Mammary epithelial cell (primary cell): ENCODE measurements at regions of chr19 and their contacts with region 1.

Region 1: GRCh38 chr19:44002566-44003460 is at the start of gene ZNF230:
- DNase-seq: peak; percentile 95
- H3K4me3 ChIP-seq: peak within 1 kb of the TSS; percentile 89 to 93 (median 91)
- H3K27ac ChIP-seq: peak within 1 kb of the TSS; percentile 45
- H3K4me1 ChIP-seq: peaks cover 11% of the 10 kb centered on the region
- H3K27me3 ChIP-seq: no peaks in the 10 kb centered on the region
- CTCF ChIP-seq: no peak
- total RNA-seq, gene ZNF230: 3.2 to 4.2 TPM

Region 2: DNA sequence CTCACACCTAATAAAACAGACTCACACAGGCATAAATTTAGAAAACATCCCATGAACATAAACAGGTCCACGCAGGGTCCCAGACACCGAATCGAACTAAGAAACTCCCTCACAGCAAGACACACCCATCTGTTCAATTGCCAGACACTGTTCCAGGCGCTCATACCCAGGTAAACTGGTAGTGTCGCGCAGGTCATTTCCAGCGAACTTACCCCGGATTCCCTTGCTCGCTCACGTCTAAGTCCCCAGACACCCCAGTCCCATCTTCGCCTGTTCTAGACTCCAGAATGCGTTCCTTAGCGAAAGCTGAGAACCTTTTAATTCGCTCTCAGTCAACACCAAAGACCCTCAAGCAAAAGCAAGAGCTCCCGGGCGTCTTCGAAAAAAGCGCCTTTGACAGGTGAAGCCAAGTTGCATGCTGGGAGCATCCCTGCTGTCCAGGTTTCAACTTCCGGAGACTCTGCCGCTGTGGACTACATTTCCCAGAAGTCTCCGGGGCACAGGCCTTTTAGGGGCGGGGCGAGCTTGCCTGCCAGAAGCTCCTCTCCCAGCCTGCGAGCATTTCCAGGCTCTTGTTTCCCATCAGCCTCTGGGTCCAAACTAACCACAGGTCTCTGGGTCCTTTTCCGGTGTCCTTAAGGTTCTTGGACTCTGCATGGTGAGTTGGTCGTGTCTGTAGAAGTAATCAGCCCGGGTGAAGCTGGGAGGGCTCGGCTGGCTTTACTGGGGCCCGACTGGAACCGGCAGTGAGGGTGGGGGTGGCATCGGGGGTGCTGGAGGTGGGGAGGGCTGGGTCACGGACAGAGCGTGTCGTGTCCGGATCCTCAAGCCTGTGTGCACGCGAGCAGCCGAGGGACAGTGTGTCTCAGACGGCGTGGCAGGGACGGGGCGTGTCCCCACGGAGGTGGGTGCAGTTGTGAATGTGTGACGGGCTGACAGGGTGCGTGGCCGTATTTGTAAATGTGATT is 175.7 kb before region 1 on chr19 and contains the start of gene ZNF283:
- CTCF ChIA-PET with region 1: no interaction called
- dilution Hi-C with region 1: no loop called
- in situ Hi-C with region 1: no loop called
- intact Hi-C with region 1: loop called (anchors 1 kb)
- DNase-seq: peak; percentile 91
- H3K4me3 ChIP-seq: peak within 1 kb of the TSS; percentile 56 to 72 (median 63)
- H3K27ac ChIP-seq: peak within 1 kb of the TSS; percentile 9
- H3K4me1 ChIP-seq: no peaks in the 10 kb centered on the region
- H3K27me3 ChIP-seq: no peaks in the 10 kb centered on the region
- CTCF ChIP-seq: no peak
- total RNA-seq, gene ZNF283: 10.8 to 13.2 TPM

Region 3: DNA sequence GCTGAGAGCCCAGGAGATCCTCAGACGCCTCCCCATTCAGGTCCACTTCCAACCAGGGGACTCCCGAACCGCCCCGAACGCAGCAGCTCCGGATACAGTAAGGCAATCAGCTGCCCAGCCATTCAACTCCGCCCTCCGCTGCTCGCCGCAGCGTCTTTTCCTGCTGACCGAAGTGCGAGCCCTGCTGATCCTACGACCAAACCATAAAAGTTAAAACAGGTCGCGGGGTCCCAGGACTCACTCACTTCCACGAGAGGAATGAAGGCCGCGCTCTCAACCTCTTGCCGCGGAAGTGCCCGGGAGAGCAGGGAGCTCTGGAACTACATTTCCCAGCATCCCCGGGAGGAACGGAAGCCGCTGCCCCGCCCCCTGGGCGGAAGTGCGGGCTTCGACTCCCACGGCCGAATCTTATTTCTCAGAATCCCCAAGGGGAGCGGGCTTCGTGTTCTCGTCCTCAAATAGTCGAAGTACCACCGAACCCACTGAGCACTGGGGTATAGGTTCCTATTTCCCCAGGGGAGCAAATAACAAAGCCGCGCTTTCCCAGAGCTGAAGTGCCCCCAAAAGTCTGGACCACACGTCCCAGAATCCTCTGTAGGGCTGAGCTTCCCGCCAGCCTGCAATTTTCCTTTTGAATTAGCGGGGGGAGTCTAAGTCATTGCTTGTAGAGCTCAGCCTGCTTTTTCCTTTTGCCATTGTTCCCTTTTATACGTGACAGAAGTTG is 67.7 kb before region 1 on chr19 and contains the start of gene ZNF45:
- CTCF ChIA-PET with region 1: no interaction called
- dilution Hi-C with region 1: no loop called
- in situ Hi-C with region 1: no loop called
- intact Hi-C with region 1: loop called (anchors 5 kb)
- DNase-seq: peak; percentile 85
- H3K4me3 ChIP-seq: peak within 1 kb of the TSS; percentile 78 to 83 (median 81)
- H3K27ac ChIP-seq: no peak within 1 kb of the TSS
- H3K4me1 ChIP-seq: peaks cover 8% of the 10 kb centered on the region
- H3K27me3 ChIP-seq: no peaks in the 10 kb centered on the region
- CTCF ChIP-seq: no peak
- total RNA-seq, gene ZNF45: 10.6 to 13.3 TPM

Region 4: GRCh38 chr19:43983912-43984686 is 18.7 kb before region 1 on chr19 and contains the start of gene ZNF155:
- CTCF ChIA-PET with region 1: no interaction called
- dilution Hi-C with region 1: no loop called
- in situ Hi-C with region 1: no loop called
- intact Hi-C with region 1: loop called (anchors 1 kb)
- DNase-seq: peak; percentile 95
- H3K4me3 ChIP-seq: peak within 1 kb of the TSS; percentile 41 to 59 (median 47)
- H3K27ac ChIP-seq: no peak within 1 kb of the TSS
- H3K4me1 ChIP-seq: no peaks in the 10 kb centered on the region
- H3K27me3 ChIP-seq: no peaks in the 10 kb centered on the region
- CTCF ChIP-seq: no peak
- total RNA-seq, gene ZNF155: 8.4 to 10.0 TPM

Region 5: DNA sequence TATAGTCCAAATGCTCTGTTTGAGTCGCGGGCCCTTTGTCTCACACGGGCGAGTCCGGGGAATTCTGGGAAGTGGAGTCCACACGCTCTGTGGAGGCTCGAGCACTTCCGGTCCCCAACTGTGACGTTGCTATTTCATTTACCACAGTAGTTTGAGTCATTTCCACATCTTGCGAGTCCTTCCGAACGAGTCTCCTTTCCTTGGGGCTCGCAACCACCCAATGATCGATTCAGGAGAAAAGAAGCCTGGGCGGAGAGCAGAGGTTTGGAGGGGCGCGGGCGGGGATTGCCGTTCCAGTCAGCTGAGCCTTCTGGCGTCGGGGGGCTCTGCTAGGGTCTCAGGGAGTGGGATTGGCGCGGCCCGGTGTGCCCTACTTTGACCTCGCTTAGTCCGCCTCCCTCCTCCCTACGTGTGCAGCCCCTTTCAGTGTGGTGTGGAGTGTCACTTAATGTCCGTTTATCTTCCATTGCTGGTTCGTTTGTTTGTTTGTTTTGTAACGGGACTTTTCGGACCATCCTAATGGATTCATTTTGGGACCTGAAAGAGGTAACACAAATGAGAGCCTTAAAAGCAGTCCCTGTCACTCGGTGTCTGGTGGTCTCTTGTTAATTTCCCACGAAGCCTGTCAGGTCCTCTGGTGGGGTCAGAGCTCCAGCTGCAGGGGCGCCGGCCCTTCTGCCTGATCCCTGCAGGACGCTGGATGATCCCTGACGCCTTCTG is 22.6 kb after region 1 on chr19 and contains the start of gene ZNF222:
- CTCF ChIA-PET with region 1: no interaction called
- dilution Hi-C with region 1: no loop called
- in situ Hi-C with region 1: no loop called
- intact Hi-C with region 1: loop called (anchors 1 kb)
- DNase-seq: peak; percentile 84
- H3K4me3 ChIP-seq: peak within 1 kb of the TSS; percentile 59 to 76 (median 74)
- H3K27ac ChIP-seq: peak within 1 kb of the TSS; percentile 30
- H3K4me1 ChIP-seq: no peaks in the 10 kb centered on the region
- H3K27me3 ChIP-seq: no peaks in the 10 kb centered on the region
- CTCF ChIP-seq: no peak
- total RNA-seq, gene ZNF222: 3.9 to 5.3 TPM

Region 6: GRCh38 chr19:44093931-44094765 is 91.3 kb after region 1 on chr19 and contains the start of gene ZNF224:
- CTCF ChIA-PET with region 1: interaction called, 4 read pairs
- dilution Hi-C with region 1: no loop called
- in situ Hi-C with region 1: no loop called
- intact Hi-C with region 1: loop called (anchors 5 kb)
- DNase-seq: peak; percentile 89
- H3K4me3 ChIP-seq: peak within 1 kb of the TSS; percentile 82 to 93 (median 89)
- H3K27ac ChIP-seq: peak within 1 kb of the TSS; percentile 49
- H3K4me1 ChIP-seq: no peaks in the 10 kb centered on the region
- H3K27me3 ChIP-seq: no peaks in the 10 kb centered on the region
- CTCF ChIP-seq: no peak
- total RNA-seq, gene ZNF224: 15.3 to 24.0 TPM